Activated CD4-positive, alpha-beta T cell treated with anti-CD3 and anti-CD28 coated beads for 36 hours (primary cell): ENCODE measurements at regions of chr19 and their contacts with region 1.

Region 1: DNA sequence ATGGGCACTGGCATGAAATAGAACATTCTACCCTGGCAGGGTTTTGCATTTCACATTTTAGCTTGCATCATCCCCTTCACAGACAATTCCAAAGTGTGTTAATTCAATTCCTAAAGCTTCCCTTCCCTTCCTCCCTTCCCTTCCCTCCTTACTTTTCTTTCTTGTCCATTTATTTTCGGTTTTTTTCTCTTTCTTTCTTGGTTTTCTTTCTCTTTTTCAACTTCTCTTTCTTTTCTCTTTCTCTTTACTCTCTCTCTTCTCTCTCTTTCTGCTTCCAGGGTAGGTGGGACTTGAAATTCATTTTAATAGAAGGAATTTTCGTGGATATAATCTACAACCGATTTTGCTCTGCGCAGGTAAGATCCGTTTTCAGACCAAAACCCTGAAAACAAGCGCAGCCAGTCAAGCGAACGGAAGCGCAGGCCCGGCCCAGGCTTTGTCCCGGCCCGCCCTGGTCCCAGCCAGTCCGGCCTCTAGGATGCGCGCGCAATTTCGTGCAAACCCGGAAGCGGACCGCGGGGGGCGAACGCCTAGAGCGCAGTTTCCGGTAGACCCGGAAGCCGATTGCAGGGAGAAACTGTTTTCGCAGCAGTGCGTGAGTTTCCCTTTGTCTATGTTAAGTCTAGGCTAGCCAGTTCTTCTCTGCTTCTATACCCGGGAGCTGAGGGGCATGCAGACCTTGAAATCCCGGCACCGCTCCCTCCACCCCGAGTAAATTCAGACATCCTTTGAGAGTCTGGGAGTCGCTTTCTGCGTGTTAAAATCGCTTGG is at the start of gene ZNF528:
- DNase-seq: peak; percentile 98
- ATAC-seq: peak; percentile 100
- H3K4me3 Mint-ChIP-seq: peak within 1 kb of the TSS; percentile 79
- H3K27ac Mint-ChIP-seq: peak within 1 kb of the TSS; percentile 94
- H3K4me1 Mint-ChIP-seq: peaks cover 14% of the 10 kb centered on the region
- H3K27me3 Mint-ChIP-seq: no peaks in the 10 kb centered on the region
- total RNA-seq, gene ZNF528: 8.2 to 8.6 TPM

Region 2: DNA sequence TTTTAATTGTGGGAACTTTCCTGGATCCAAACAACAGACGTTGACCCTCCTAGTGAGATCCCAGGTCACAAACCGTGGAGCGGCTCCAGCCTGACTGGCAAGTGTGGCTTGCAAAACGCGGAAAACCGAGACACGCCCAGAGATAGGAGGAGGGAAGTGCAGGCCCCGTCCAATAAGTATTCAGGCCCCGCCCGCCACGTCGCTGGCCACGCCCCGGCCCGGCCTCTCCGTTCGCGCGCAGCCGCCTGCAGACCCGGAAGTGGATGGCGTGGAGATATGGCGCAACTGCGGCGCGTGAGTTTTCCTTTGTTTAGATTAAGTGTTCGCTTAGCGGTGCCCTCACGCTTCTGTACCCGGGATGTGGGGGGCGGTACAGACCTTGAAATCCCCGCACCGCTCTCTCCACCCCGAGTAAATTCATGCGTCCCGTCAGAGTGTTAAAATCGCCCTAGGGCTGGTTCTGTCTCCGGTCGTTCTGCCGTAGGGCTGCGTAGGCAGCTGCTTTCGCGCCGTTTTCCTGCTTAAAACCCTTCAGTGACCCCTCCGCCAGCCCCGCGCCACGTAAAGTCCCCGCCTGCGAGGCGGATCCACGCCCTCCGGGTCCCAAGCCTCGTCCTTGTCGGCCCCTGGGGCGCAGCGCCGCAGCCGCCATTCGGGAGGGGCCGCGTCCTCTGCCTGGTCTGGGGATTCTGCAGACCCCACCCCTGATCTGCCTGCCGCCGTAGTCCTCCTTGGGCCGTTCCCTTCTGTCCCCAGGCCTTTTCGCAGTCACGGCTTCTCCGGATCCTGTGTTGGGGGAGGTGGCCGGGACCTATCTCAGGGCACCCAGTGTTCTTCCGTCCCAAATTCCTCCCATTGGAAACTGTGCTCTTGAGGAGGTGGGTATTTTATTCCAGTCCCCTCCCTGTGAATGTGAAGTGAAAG is 127.9 kb before region 1 on chr19 and contains the start of gene ZNF766:
- CTCF ChIA-PET with region 1: no interaction called
- POLR2A ChIA-PET with region 1: no interaction called
- intact Hi-C with region 1: loop called in 1 of 2 experiments (anchors 1 kb)
- DNase-seq: peak; percentile 98
- ATAC-seq: peak; percentile 99
- H3K4me3 Mint-ChIP-seq: peak within 1 kb of the TSS; percentile 96
- H3K27ac Mint-ChIP-seq: peak within 1 kb of the TSS; percentile 96
- H3K4me1 Mint-ChIP-seq: peaks cover 35% of the 10 kb centered on the region
- H3K27me3 Mint-ChIP-seq: no peaks in the 10 kb centered on the region
- total RNA-seq, gene ZNF766: 28.6 to 34.2 TPM

Region 3: DNA sequence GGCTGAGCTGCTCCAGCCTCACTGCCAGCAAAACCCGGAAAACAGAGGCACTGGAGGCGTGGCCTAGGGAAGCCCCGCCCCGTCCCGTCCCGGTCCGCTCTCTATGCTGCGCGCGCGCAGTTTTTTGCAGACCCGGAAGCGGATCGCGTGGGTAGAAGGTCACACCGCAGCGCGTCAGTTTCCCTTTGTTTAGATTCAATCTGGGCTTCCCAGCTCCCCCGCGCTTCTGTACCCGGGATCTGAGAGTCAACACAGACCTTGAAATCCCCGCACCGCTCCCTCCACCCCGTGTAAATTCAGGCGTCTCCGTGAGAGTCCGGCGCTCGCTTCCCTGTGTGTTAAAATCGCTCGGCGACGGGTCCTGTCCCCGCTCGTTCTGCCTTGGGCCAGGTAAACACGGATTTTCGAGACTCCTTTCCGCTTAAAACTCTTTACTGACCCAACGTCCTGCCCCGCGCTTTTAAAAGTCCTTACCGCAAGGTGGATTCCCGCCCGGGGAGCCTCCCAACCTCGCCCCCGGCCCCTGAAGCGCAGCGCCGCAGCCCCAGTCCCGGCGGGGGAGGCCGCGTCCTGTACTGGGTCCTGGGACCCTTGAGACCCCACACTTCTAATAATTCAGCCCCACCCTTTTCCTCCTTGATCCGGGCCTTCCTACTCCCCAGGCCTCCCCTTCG is 61.2 kb before region 1 on chr19 and contains the start of gene ZNF610:
- CTCF ChIA-PET with region 1: no interaction called
- POLR2A ChIA-PET with region 1: no interaction called
- intact Hi-C with region 1: loop called in 1 of 2 experiments (anchors 1 kb)
- DNase-seq: peak; percentile 96
- ATAC-seq: peak; percentile 97
- H3K4me3 Mint-ChIP-seq: peak within 1 kb of the TSS; percentile 97
- H3K27ac Mint-ChIP-seq: peak within 1 kb of the TSS; percentile 96
- H3K4me1 Mint-ChIP-seq: peaks cover 10% of the 10 kb centered on the region
- H3K27me3 Mint-ChIP-seq: no peaks in the 10 kb centered on the region
- total RNA-seq, gene ZNF610: 2.3 to 3.3 TPM

Region 4: GRCh38 chr19:52369559-52370340 is 27.7 kb before region 1 on chr19 and contains the start of gene ZNF880:
- CTCF ChIA-PET with region 1: interaction called, 4 read pairs
- POLR2A ChIA-PET with region 1: no interaction called
- intact Hi-C with region 1: loop called in 1 of 2 experiments (anchors 1 kb)
- DNase-seq: peak; percentile 96
- ATAC-seq: peak; percentile 99
- H3K4me3 Mint-ChIP-seq: peak within 1 kb of the TSS; percentile 94
- H3K27ac Mint-ChIP-seq: peak within 1 kb of the TSS; percentile 99
- H3K4me1 Mint-ChIP-seq: peaks cover 11% of the 10 kb centered on the region
- H3K27me3 Mint-ChIP-seq: no peaks in the 10 kb centered on the region
- total RNA-seq, gene ZNF880: 11.5 to 13.7 TPM

Region 5: DNA sequence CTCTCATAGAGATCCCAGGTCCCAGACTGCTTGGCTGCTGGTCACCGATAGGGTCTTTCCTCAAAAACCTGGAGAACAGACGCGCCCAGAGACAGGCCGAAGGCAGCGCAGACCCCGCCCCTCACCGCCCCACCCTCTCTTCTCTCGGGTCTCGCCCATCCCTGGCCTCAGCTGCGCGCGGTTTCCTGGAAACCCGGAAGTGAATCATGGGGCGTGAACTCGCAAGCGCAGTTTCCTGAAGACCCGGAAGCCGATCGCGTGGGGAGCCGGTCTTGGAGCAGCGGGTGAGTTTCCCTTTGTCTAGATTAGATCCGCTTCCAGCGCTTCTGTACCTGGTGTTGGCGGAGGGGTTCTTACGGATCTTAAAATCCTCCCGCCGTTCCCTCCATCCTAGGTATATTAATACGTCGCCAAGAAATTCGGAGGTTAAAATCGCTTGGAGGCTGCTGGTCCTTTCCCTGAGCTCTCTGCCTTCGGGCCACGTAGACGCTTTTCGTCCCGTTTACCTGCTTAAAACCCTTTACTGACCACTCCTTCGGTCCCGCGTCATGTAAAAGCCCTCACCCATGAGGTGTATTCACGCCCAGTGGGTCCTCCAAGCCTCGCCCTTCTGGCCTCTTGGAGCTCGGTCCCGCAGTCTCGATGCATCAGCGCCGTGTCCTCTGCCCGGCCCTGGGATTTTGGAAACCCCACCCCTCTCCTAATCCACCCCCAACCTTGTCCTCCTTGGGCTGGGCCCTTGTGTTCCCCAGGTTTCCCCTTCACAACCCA is 56.0 kb after region 1 on chr19 and contains the start of gene ZNF578:
- CTCF ChIA-PET with region 1: no interaction called
- POLR2A ChIA-PET with region 1: no interaction called
- intact Hi-C with region 1: loop called in 1 of 2 experiments (anchors 1 kb)
- DNase-seq: peak; percentile 89
- ATAC-seq: peak; percentile 96
- H3K4me3 Mint-ChIP-seq: peak within 1 kb of the TSS; percentile 75
- H3K27ac Mint-ChIP-seq: peak within 1 kb of the TSS; percentile 75
- H3K4me1 Mint-ChIP-seq: peaks cover 11% of the 10 kb centered on the region
- H3K27me3 Mint-ChIP-seq: peaks cover 4% of the 10 kb centered on the region
- total RNA-seq, gene ZNF578: 0.77 to 1.1 TPM

Region 6: GRCh38 chr19:52492597-52493470 is 95.3 kb after region 1 on chr19:
- CTCF ChIA-PET with region 1: no interaction called
- POLR2A ChIA-PET with region 1: no interaction called
- intact Hi-C with region 1: no loop called
- DNase-seq: peak; percentile 54
- ATAC-seq: peak; percentile 58
- H3K4me3 Mint-ChIP-seq: no peak overlapping the region
- H3K27ac Mint-ChIP-seq: no peak overlapping the region
- H3K4me1 Mint-ChIP-seq: no peaks in the 10 kb centered on the region
- H3K27me3 Mint-ChIP-seq: peaks cover 7% of the 10 kb centered on the region

Region 7: GRCh38 chr19:52535771-52536447 is 138.4 kb after region 1 on chr19:
- CTCF ChIA-PET with region 1: no interaction called
- POLR2A ChIA-PET with region 1: no interaction called
- intact Hi-C with region 1: no loop called
- DNase-seq: peak; percentile 97
- ATAC-seq: peak; percentile 94
- H3K4me3 Mint-ChIP-seq: peak overlapping the region; percentile 83
- H3K27ac Mint-ChIP-seq: peak overlapping the region; percentile 94
- H3K4me1 Mint-ChIP-seq: peaks cover 28% of the 10 kb centered on the region
- H3K27me3 Mint-ChIP-seq: no peaks in the 10 kb centered on the region

Region 8: DNA sequence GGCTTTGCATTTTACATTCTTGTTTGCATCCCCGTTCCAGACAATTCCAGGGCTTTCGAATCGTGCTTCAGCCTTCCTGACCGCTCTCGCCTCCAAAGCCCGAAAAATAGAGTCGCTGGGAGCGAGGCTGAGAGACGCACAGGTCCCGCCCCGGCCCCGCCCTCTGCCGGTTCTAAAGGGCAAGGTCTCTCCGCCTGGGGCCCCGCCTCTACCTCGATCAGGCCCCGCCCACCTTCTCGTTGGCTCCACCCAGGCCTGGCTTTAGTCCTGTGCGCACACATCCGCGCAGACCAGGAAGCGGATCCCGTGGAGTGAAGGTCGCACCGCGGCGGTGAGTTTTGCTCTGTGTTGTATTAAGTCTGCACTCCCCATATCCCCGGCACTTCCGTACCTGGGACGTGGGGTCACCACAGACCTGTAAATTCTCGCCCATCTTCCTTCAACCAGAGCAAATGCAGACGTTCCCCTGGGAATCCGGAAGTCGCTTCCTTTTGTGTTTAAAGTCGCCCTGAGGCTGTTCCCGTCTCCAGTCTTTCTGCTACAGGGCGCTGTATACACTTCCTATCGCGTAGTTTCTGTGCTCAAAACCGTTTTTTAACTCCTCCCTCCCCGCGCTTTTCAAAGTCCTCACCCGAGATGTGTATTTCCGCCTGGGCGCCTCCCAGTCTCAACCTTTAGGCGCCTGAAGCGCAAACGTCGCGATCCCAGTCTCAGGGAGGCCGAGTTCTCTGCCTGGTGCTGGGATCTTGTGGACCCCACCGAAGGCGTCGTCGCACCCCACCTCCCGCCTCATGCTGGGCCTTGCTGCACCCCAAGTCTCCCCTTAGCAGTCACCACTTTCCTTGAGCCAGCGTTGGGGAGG is 172.7 kb after region 1 on chr19 and contains the start of gene ZNF701:
- CTCF ChIA-PET with region 1: no interaction called
- POLR2A ChIA-PET with region 1: no interaction called
- intact Hi-C with region 1: loop called in 1 of 2 experiments (anchors 1 kb)
- DNase-seq: peak; percentile 98
- ATAC-seq: peak; percentile 99
- H3K4me3 Mint-ChIP-seq: peak within 1 kb of the TSS; percentile 88
- H3K27ac Mint-ChIP-seq: peak within 1 kb of the TSS; percentile 96
- H3K4me1 Mint-ChIP-seq: peaks cover 27% of the 10 kb centered on the region
- H3K27me3 Mint-ChIP-seq: no peaks in the 10 kb centered on the region
- total RNA-seq, gene ZNF701: 19.0 to 21.5 TPM

Region 9: GRCh38 chr19:52601025-52601973 is 203.8 kb after region 1 on chr19:
- CTCF ChIA-PET with region 1: no interaction called
- POLR2A ChIA-PET with region 1: no interaction called
- intact Hi-C with region 1: loop called in 1 of 2 experiments (anchors 1 kb)
- DNase-seq: peak; percentile 97
- ATAC-seq: peak; percentile 98
- H3K4me3 Mint-ChIP-seq: peak overlapping the region; percentile 86
- H3K27ac Mint-ChIP-seq: peak overlapping the region; percentile 83
- H3K4me1 Mint-ChIP-seq: peaks cover 26% of the 10 kb centered on the region
- H3K27me3 Mint-ChIP-seq: no peaks in the 10 kb centered on the region

Region 10: GRCh38 chr19:53195265-53195903 is 797.9 kb after region 1 on chr19:
- CTCF ChIA-PET with region 1: no interaction called
- POLR2A ChIA-PET with region 1: no interaction called
- intact Hi-C with region 1: no loop called
- DNase-seq: peak; percentile 83
- ATAC-seq: peak; percentile 50
- H3K4me3 Mint-ChIP-seq: peak overlapping the region; percentile 22
- H3K27ac Mint-ChIP-seq: peak overlapping the region; percentile 8
- H3K4me1 Mint-ChIP-seq: peaks cover 33% of the 10 kb centered on the region
- H3K27me3 Mint-ChIP-seq: no peaks in the 10 kb centered on the region